A549 (cell line): ENCODE measurements at regions of chr19 and their contacts with region 1.

Region 1: DNA sequence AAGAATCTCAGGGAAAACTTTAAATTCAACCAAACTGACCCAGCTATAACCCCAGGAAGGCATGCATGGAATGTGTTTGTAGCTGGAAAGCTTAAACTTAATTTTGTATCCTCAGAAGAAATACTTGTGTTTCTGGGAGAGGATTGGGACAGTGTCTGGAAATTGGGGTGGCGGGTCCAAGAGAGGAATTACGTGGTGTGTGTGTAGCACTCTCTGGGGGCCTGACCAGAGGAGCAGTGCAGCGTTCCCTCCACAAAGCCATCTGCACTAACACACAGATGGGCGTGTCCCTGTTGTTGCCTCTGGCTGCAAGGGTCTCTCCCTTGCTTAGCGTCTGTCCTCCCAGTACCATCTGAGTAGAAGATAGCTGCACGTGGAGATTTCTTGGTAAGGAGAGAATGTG is 6.4 kb downstream of the GARRE1 start:
- DNase-seq: no peak
- ATAC-seq: peak; percentile 48 to 62; a peak in 5 of 6 replicates
- H3K4me3 ChIP-seq: no peak overlapping the region
- H3K27ac ChIP-seq: peak overlapping the region in 1 of 2 experiments; percentile 1; a peak in 1 of 6 replicates
- H3K4me1 ChIP-seq: peaks cover 47% of the 10 kb centered on the region
- CTCF ChIP-seq: no peak
- EP300 ChIP-seq: no peak
- POLR2A ChIP-seq: no peak
- RAD21 ChIP-seq: no peak

Region 2: GRCh38 chr19:34274827-34275625 is 14.3 kb after region 1 on chr19:
- CTCF ChIA-PET with region 1: interaction called, 29 read pairs
- POLR2A ChIA-PET with region 1: interaction called, 3 read pairs
- DNase-seq: no peak
- ATAC-seq: no peak
- H3K4me3 ChIP-seq: no peak overlapping the region
- H3K27ac ChIP-seq: no peak overlapping the region
- H3K4me1 ChIP-seq: peaks cover 7% of the 10 kb centered on the region
- CTCF ChIP-seq: no peak
- EP300 ChIP-seq: no peak
- POLR2A ChIP-seq: no peak
- RAD21 ChIP-seq: no peak